Natural killer cell (primary cell): ENCODE measurements at regions of chr7 and their contacts with region 1.

Region 1: GRCh38 chr7:130010689-130011412 is 40.3 kb downstream of the ZC3HC1 start:
- DNase-seq: peak; percentile 87 to 93
- ATAC-seq: peak; percentile 90 to 98 (median 97)
- H3K4me3 ChIP-seq: no peak overlapping the region
- H3K4me3 Mint-ChIP-seq: no peak overlapping the region
- H3K27ac ChIP-seq: no peak overlapping the region
- H3K27ac Mint-ChIP-seq: peak overlapping the region in 1 of 2 donors; percentile 31
- H3K4me1 ChIP-seq: no peaks in the 10 kb centered on the region
- H3K4me1 Mint-ChIP-seq: peaks cover 5% of the 10 kb centered on the region in 2 donors
- H3K27me3 ChIP-seq: no peaks in the 10 kb centered on the region
- H3K27me3 Mint-ChIP-seq: no peaks in the 10 kb centered on the region
- CTCF ChIP-seq: peak; percentile 87

Region 2: GRCh38 chr7:129343099-129343700 is 667.7 kb before region 1 on chr7:
- intact Hi-C with region 1: loop called (anchors 2 kb)
- DNase-seq: peak in 1 of 2 donors; percentile 65
- ATAC-seq: peak in 2 of 3 donors; percentile 59 to 70
- H3K4me3 ChIP-seq: no peak overlapping the region
- H3K4me3 Mint-ChIP-seq: no peak overlapping the region
- H3K27ac ChIP-seq: no peak overlapping the region
- H3K27ac Mint-ChIP-seq: no peak overlapping the region
- H3K4me1 ChIP-seq: peaks cover 3% of the 10 kb centered on the region
- H3K4me1 Mint-ChIP-seq: peaks cover 17 to 18% of the 10 kb centered on the region in 2 donors
- H3K27me3 ChIP-seq: no peaks in the 10 kb centered on the region
- H3K27me3 Mint-ChIP-seq: no peaks in the 10 kb centered on the region
- CTCF ChIP-seq: peak; percentile 77

Region 3: GRCh38 chr7:129367700-129368388 is 643.0 kb before region 1 on chr7:
- intact Hi-C with region 1: loop called (anchors 1 kb)
- DNase-seq: peak; percentile 62 to 86
- ATAC-seq: peak; percentile 78 to 82 (median 78)
- H3K4me3 ChIP-seq: no peak overlapping the region
- H3K4me3 Mint-ChIP-seq: peak overlapping the region; percentile 73
- H3K27ac ChIP-seq: peak overlapping the region; percentile 28
- H3K27ac Mint-ChIP-seq: peak overlapping the region; percentile 14 to 81
- H3K4me1 ChIP-seq: peaks cover 14% of the 10 kb centered on the region
- H3K4me1 Mint-ChIP-seq: peaks cover 19 to 23% of the 10 kb centered on the region in 2 donors
- H3K27me3 ChIP-seq: no peaks in the 10 kb centered on the region
- H3K27me3 Mint-ChIP-seq: peaks cover 0 to 2% of the 10 kb centered on the region in 2 donors
- CTCF ChIP-seq: peak; percentile 93

Region 4: DNA sequence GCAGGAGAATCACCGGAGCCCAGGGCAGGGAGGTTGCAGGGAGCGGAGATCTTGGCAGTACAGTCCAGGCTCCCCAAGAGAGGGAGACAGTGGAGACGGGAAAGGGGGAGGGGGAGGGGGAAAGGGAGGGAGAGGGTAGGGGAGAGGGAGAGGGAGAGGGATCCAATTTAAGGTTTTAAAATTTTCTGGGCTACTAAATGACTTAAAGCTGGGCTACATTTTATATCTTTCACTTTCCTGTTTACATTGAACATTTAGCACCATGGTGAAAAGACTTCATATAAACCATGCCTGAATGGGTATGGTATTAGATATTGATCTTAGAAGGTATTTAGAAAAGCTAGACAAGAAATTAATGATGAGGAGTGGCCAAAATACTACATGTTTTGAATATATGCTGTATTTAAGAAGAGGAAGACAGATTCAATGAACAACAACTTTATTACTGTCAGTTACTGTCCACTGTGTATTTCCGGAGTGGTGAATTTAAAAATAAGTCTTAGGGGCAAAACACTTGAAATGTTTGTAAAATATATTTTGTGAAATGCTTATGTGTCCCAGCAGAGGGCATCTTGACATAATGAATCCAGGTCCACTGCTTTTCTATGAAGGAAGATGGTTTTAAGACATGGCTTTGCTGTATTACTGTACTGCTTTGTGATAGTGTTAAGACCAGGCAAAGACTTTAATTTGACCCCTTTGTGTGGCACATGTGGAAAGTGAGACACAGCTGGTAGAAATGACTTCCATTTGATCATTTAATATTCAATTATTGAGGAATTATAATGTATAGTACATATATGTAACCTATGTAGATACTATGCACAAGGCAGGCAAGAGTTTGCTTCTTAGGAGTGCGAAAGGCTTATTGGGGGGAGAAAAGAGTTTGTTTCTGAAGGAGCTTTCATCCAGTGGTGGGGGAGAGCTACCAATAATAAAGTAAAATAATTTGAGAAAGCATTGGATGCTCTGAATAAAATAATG is 346.5 kb before region 1 on chr7:
- intact Hi-C with region 1: loop called (anchors 10 kb)
- DNase-seq: peak in 1 of 2 donors; percentile 34
- ATAC-seq: peak in 2 of 3 donors; percentile 40 to 42
- H3K4me3 ChIP-seq: no peak overlapping the region
- H3K4me3 Mint-ChIP-seq: no peak overlapping the region
- H3K27ac ChIP-seq: no peak overlapping the region
- H3K27ac Mint-ChIP-seq: peak overlapping the region in 1 of 2 donors; percentile 5
- H3K4me1 ChIP-seq: no peaks in the 10 kb centered on the region
- H3K4me1 Mint-ChIP-seq: peaks cover 13 to 21% of the 10 kb centered on the region in 2 donors
- H3K27me3 ChIP-seq: no peaks in the 10 kb centered on the region
- H3K27me3 Mint-ChIP-seq: no peaks in the 10 kb centered on the region
- CTCF ChIP-seq: peak; percentile 28

Region 5: DNA sequence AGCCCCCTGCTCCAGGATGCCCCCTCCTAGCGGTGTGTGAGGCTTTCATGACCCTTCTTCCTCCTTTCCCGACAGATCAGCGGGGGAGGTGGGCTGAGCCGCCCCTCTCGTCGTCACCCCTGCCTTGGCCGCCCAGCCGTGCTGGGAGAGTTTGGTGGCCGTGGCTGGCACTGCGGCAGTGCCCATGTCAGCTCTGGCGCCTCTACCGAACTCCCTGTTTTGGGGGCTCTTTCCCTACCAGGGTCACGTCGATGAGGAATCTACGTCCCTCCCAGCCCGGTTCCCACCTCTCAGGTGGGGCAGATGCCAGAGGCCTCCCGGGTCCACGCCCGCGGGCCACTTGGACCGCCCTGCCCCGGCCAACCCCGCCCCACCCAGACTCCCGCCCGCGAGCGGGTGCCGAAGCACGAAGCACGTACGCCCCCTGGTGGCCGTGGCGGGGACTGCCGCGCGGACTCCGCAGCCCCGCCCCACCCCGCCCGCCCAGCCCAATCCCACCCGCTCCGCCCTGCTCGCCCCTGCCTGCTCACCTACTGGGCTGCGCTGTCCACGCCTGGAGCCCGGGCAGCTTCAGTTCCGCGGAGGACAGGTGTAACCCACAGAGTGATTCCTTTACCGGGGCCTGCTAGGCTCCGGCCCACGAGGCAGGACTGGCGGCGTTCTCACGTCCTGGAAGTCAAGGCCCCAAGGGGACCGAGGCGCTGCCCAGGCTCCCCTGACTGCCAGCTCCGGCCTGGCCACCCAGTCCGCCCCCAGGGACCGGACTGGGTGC is 185.2 kb before region 1 on chr7:
- intact Hi-C with region 1: loop called (anchors 1 kb)
- DNase-seq: peak; percentile 86 to 91
- ATAC-seq: peak; percentile 92 to 95 (median 92)
- H3K4me3 ChIP-seq: peak overlapping the region; percentile 62
- H3K4me3 Mint-ChIP-seq: peak overlapping the region; percentile 90
- H3K27ac ChIP-seq: no peak overlapping the region
- H3K27ac Mint-ChIP-seq: peak overlapping the region in 1 of 2 donors; percentile 81
- H3K4me1 ChIP-seq: peaks cover 31% of the 10 kb centered on the region
- H3K4me1 Mint-ChIP-seq: peaks cover 26 to 29% of the 10 kb centered on the region in 2 donors
- H3K27me3 ChIP-seq: no peaks in the 10 kb centered on the region
- H3K27me3 Mint-ChIP-seq: no peaks in the 10 kb centered on the region
- CTCF ChIP-seq: peak; percentile 93

Region 6: DNA sequence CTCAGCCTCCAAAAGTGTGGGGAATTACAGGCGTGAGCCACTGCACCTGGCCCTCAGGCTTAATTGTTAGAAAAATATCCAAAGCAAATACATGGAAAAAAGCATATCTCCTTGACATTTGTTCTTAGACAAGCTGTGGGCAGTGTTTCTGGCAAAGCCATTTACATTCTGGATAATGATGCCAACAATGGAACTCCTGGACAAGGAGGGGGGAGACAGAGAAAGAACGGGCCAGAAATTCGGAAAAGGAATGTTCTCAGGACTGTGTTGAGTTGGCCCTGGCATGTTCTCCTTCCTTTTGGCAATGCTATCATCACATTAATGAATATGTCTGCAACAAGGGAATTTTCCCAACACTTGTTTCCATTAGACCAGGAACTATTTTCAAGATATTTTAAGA is 146.8 kb before region 1 on chr7:
- intact Hi-C with region 1: loop called (anchors 10 kb)
- DNase-seq: no peak
- ATAC-seq: no peak
- H3K4me3 ChIP-seq: no peak overlapping the region
- H3K4me3 Mint-ChIP-seq: no peak overlapping the region
- H3K27ac ChIP-seq: no peak overlapping the region
- H3K27ac Mint-ChIP-seq: no peak overlapping the region
- H3K4me1 ChIP-seq: peaks cover 4% of the 10 kb centered on the region
- H3K4me1 Mint-ChIP-seq: peaks cover 62 to 76% of the 10 kb centered on the region in 2 donors
- H3K27me3 ChIP-seq: no peaks in the 10 kb centered on the region
- H3K27me3 Mint-ChIP-seq: no peaks in the 10 kb centered on the region
- CTCF ChIP-seq: no peak

Region 7: DNA sequence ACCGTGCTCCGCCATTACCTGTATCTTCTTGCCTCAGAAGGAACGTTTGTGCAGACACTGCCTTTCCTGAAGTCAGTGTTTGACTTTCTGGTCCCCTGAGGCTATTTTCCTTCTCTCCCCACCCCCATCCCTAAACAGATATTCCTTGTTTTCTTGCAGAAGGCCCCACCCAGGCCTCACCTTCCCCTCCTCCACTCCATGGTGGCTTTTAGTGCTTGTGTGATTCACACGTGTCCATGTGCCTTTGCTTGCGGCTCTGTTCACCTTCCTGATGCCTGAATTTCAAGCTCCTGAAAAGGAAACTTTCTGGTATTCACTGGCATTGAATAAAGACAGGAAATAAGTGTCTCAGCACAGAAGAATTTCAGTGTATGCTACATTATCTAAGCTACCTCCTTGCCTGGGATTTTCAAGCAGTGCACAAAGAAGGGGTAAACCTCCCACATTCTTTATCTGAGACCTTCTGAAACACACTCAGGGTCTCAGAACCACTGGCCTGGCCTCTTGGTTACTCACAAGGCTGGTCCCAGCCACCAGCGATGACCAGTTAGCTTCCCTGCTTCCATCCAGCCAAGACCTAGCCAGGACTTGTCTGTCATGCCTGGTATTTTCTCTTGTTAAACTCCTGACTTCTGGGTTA is 40.9 kb before region 1 on chr7:
- intact Hi-C with region 1: no loop called
- DNase-seq: no peak
- ATAC-seq: no peak
- H3K4me3 ChIP-seq: no peak overlapping the region
- H3K4me3 Mint-ChIP-seq: no peak overlapping the region
- H3K27ac ChIP-seq: no peak overlapping the region
- H3K27ac Mint-ChIP-seq: no peak overlapping the region
- H3K4me1 ChIP-seq: no peaks in the 10 kb centered on the region
- H3K4me1 Mint-ChIP-seq: no peaks in the 10 kb centered on the region
- H3K27me3 ChIP-seq: no peaks in the 10 kb centered on the region
- H3K27me3 Mint-ChIP-seq: peaks cover 0 to 2% of the 10 kb centered on the region in 2 donors
- CTCF ChIP-seq: no peak

Region 8: GRCh38 chr7:131027287-131027773 is 1016.5 kb after region 1 on chr7:
- intact Hi-C with region 1: no loop called
- DNase-seq: peak in 1 of 2 donors; percentile 67
- ATAC-seq: peak; percentile 32 to 46 (median 35)
- H3K4me3 ChIP-seq: no peak overlapping the region
- H3K4me3 Mint-ChIP-seq: peak overlapping the region; percentile 73
- H3K27ac ChIP-seq: peak overlapping the region; percentile 59
- H3K27ac Mint-ChIP-seq: peak overlapping the region; percentile 76 to 82
- H3K4me1 ChIP-seq: peaks cover 25% of the 10 kb centered on the region
- H3K4me1 Mint-ChIP-seq: peaks cover 75 to 76% of the 10 kb centered on the region in 2 donors
- H3K27me3 ChIP-seq: no peaks in the 10 kb centered on the region
- H3K27me3 Mint-ChIP-seq: no peaks in the 10 kb centered on the region
- CTCF ChIP-seq: no peak